CD8-positive, alpha-beta T cell (primary cell): ENCODE measurements at regions of chr11 and their contacts with region 1.

Region 1: GRCh38 chr11:59550368-59550841 is 39.1 kb downstream of the OR4D9 start:
- DNase-seq: peak; percentile 68 to 93 (median 79)
- ATAC-seq: peak; percentile 85
- H3K4me3 ChIP-seq: peak overlapping the region; percentile 62 to 67
- H3K4me3 Mint-ChIP-seq: peak overlapping the region; percentile 77
- H3K27ac ChIP-seq: peak overlapping the region; percentile 36 to 48
- H3K27ac Mint-ChIP-seq: peak overlapping the region; percentile 87
- H3K4me1 ChIP-seq: peaks cover 10% of the 10 kb centered on the region
- H3K4me1 Mint-ChIP-seq: peaks cover 23% of the 10 kb centered on the region
- H3K27me3 ChIP-seq: no peaks in the 10 kb centered on the region
- H3K27me3 Mint-ChIP-seq: no peaks in the 10 kb centered on the region
- CTCF ChIP-seq: no peak

Region 2: GRCh38 chr11:59560702-59561469 is 10.5 kb after region 1 on chr11:
- CTCF ChIA-PET with region 1: interaction called, 3 read pairs
- POLR2A ChIA-PET with region 1: interaction called, 21 read pairs
- intact Hi-C with region 1: loop called (anchors 1 kb)
- DNase-seq: peak; percentile 64 to 91 (median 82)
- ATAC-seq: peak; percentile 74
- H3K4me3 ChIP-seq: peak overlapping the region; percentile 73 to 80
- H3K4me3 Mint-ChIP-seq: peak overlapping the region; percentile 96
- H3K27ac ChIP-seq: peak overlapping the region; percentile 53 to 60
- H3K27ac Mint-ChIP-seq: peak overlapping the region; percentile 94
- H3K4me1 ChIP-seq: peaks cover 20% of the 10 kb centered on the region
- H3K4me1 Mint-ChIP-seq: peaks cover 35% of the 10 kb centered on the region
- H3K27me3 ChIP-seq: no peaks in the 10 kb centered on the region
- H3K27me3 Mint-ChIP-seq: no peaks in the 10 kb centered on the region
- CTCF ChIP-seq: no peak

Region 3: GRCh38 chr11:59668950-59669610 is 118.7 kb after region 1 on chr11 and contains the start of gene PATL1:
- CTCF ChIA-PET with region 1: interaction called, 7 read pairs
- POLR2A ChIA-PET with region 1: interaction called, 13 read pairs
- intact Hi-C with region 1: loop called in 1 of 2 experiments (anchors 5 kb)
- DNase-seq: peak; percentile 98 to 100 (median 99)
- ATAC-seq: peak; percentile 88
- H3K4me3 ChIP-seq: peak within 1 kb of the TSS; percentile 79 to 98
- H3K4me3 Mint-ChIP-seq: peak within 1 kb of the TSS; percentile 98
- H3K27ac ChIP-seq: peak within 1 kb of the TSS; percentile 98 to 99
- H3K27ac Mint-ChIP-seq: peak within 1 kb of the TSS; percentile 100
- H3K4me1 ChIP-seq: peaks cover 22% of the 10 kb centered on the region
- H3K4me1 Mint-ChIP-seq: peaks cover 43% of the 10 kb centered on the region
- H3K27me3 ChIP-seq: no peaks in the 10 kb centered on the region
- H3K27me3 Mint-ChIP-seq: no peaks in the 10 kb centered on the region
- CTCF ChIP-seq: no peak
- total RNA-seq, gene PATL1: 59.5 to 59.6 TPM

Region 4: DNA sequence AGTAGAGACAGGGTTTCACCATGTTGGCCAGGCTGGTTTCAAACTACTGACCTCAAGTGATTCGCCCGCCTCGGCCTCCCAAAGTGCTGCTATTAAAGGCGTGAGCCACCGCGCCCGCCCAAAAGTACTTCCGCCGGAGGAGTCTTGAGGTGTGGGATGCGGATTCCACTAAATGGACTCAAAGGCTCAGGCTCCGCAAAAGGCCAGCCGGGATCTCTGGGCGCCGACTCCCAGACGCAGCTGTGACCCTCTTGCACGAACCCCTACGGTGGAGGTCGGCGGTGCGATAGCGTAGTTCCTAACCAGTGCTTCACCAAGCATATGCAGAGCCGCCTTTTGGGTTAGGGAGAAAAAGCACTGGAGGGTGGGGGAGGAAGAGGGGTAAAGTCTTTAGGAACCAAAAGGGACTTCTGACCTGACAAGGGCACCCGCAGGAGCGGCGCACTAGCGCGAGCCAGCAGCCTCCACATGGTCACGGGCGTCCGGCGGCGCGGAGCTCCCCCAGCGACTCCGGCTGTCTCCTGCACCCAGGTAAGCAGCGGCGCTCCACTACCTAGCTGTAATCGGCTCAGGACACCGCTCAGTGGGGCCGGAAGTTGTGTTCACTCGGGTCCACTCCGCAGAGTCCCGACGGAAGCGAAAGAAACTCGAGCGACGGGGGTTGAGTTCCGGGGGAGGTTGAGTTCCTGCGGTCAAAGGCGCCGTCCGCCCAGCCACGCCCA is 259.9 kb after region 1 on chr11 and contains the start of gene MRPL16:
- CTCF ChIA-PET with region 1: interaction called, 3 read pairs
- POLR2A ChIA-PET with region 1: no interaction called
- intact Hi-C with region 1: loop called in 1 of 2 experiments (anchors 5 kb)
- DNase-seq: peak; percentile 81 to 95 (median 91)
- ATAC-seq: peak; percentile 99
- H3K4me3 ChIP-seq: peak within 1 kb of the TSS; percentile 97 to 99
- H3K4me3 Mint-ChIP-seq: peak within 1 kb of the TSS; percentile 91
- H3K27ac ChIP-seq: peak within 1 kb of the TSS; percentile 73 to 87
- H3K27ac Mint-ChIP-seq: peak within 1 kb of the TSS; percentile 89
- H3K4me1 ChIP-seq: peaks cover 18% of the 10 kb centered on the region
- H3K4me1 Mint-ChIP-seq: peaks cover 23% of the 10 kb centered on the region
- H3K27me3 ChIP-seq: no peaks in the 10 kb centered on the region
- H3K27me3 Mint-ChIP-seq: peaks cover 4% of the 10 kb centered on the region
- CTCF ChIP-seq: peak; percentile 35
- total RNA-seq, gene MRPL16: 26.5 to 27.8 TPM